Sigmoid colon (tissue), 7 donors: ENCODE measurements at regions of chr2 and their contacts with region 1.

Region 1: DNA sequence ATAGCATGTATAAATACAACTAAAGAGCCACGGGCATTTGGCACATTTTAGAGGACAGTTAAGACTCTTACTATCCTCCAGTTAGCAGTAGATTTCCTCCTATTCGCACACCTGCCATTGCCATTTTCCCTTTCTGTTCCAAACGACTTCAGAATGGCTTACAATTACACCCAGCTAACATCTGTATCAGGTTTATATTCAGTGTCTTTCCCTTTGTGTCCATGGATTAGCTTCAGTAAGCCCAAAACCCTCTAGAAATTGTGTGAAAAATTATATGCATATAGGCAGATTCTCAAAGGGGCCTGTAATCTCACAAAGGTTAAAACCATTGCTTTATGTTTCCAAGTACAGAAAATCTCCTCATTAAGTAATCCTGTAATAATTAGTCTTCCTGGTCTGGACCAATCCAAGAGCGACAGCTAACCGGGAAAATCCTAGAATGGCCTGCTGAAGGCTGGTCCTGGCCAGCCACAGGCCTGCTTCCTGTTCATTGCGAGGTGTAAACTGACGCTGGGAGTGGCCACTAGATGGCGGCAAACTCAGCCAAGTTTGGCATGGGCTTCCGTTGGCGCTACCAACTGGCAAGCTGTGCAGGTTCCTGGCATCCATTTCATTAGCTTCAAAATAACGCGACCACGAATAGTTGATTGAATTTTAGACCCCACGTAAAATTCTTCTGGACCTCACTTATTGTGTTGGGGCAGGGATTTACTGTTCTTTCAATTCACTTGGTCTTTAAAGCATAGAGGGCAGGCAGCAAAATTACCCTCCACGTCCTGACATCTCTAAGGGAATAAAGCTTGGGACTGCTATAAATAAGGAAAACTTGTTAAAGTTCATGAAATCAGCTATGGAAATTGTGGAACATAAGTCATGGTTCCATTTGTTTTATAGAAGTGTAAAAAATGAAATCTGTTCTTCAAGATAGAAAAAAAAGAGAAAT is 17.1 kb downstream of the ARHGAP25 start:
- DNase-seq: peak; percentile 92
- H3K4me3 ChIP-seq: peak overlapping the region in 1 of 4 donors; percentile 19
- H3K27ac ChIP-seq: no peak overlapping the region
- H3K4me1 ChIP-seq: peaks cover 0 to 3% (median 0%) of the 10 kb centered on the region in 4 donors
- H3K27me3 ChIP-seq: no peaks in the 10 kb centered on the region
- CTCF ChIP-seq: peak; percentile 78 to 87 (median 84)
- EP300 ChIP-seq: no peak
- POLR2A ChIP-seq: no peak

Region 2: GRCh38 chr2:68832233-68832869 is 80.7 kb after region 1 on chr2:
- intact Hi-C with region 1: loop called (anchors 5 kb)
- DNase-seq: peak; percentile 81
- H3K4me3 ChIP-seq: no peak overlapping the region
- H3K27ac ChIP-seq: peak overlapping the region; percentile 56 to 83 (median 78)
- H3K4me1 ChIP-seq: peaks cover 0 to 37% (median 37%) of the 10 kb centered on the region in 4 donors
- H3K27me3 ChIP-seq: no peaks in the 10 kb centered on the region
- CTCF ChIP-seq: no peak
- EP300 ChIP-seq: no peak
- POLR2A ChIP-seq: no peak

Region 3: DNA sequence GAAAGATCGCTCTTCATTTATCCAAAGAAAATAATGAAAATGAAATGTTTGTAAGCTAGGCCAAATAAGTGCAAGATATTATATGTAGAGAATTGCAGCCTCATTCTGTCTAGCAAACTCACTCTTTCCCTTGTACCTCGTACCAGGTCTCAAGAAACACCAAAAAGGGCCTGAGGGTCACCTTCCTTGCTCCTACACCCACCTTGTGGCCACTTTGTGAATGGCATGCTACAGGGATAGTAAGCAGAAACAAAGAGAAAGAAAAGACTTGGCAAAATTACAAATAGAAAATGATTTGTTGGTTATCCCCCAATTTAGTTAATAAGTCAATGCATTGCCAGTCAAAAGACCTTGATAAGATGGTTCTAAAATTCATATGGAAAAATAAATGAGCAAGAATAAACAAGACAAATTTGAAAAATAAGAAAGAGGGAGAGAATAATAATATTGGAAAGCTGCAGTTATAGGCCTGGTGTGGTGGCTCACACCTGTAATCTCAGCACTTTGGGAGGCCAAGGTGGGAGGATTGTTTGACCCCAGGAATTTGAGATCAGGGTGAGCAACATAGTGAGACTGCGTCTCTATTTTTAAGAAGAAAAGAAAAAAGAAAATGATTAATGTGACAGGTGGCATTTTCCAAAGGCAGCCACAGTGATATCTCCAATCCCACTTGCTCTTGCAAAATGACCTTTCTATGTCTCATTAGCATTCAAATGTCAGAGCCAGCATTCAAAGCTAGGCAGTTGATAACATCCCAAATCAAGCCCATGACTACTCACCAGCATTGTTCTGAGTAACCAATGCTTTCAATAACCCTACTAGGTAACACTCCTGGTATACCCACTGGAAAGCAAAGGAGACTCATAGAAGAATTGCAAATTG is 158.4 kb after region 1 on chr2:
- intact Hi-C with region 1: loop called (anchors 5 kb)
- DNase-seq: peak; percentile 81
- H3K4me3 ChIP-seq: no peak overlapping the region
- H3K27ac ChIP-seq: no peak overlapping the region
- H3K4me1 ChIP-seq: peaks cover 0 to 19% (median 11%) of the 10 kb centered on the region in 4 donors
- H3K27me3 ChIP-seq: no peaks in the 10 kb centered on the region
- CTCF ChIP-seq: peak; percentile 66 to 86 (median 84)
- EP300 ChIP-seq: no peak
- POLR2A ChIP-seq: no peak